ENCODE measurements at regions of chr22 and their contacts with region 1.

Region 1: DNA sequence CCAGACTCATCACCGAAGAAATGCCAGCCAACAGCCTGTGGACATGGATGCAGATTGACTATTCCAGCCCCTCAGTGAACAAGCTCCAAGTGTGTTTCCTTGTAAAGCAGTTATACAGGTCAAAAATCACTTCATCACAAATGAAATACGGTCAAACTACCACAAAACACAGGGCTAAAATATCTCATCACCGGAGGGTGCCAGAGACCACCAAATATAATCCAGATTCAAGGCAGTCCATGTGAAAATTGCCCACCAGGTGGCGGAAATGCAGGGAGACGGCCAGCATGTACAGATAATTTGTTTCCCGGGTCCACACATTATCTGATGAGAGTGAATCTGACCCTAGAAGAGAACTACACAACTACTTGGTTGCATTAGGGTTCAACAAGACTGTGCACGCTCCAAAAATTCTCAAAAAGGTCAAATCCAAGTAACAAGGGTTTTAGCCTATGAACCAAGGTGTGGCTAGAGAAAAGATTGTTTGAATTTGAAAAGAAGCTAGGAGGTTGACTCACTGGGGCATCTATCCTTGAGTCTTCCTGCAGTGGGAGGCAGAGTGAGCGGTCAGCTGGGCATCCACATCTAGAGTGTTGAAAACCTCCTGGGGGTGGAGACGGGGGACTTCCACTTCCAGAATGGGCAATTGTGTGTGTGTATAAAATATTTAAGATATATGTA is 71.7 kb downstream of the IGLL5 start:
- DNase-seq: peak; percentile 61 to 72
- H3K4me3 ChIP-seq: no peak overlapping the region
- H3K27ac ChIP-seq: no peak overlapping the region
- H3K4me1 ChIP-seq: no peaks in the 10 kb centered on the region
- H3K27me3 ChIP-seq: no peaks in the 10 kb centered on the region
- CTCF ChIP-seq: peak; percentile 79 to 94 (median 86)
- POLR2A ChIP-seq: no peak

Region 2: GRCh38 chr22:23035557-23036277 is 76.4 kb after region 1 on chr22:
- intact Hi-C with region 1: no loop called
- DNase-seq: no peak
- H3K4me3 ChIP-seq: no peak overlapping the region
- H3K27ac ChIP-seq: no peak overlapping the region
- H3K4me1 ChIP-seq: no peaks in the 10 kb centered on the region
- H3K27me3 ChIP-seq: no peaks in the 10 kb centered on the region
- CTCF ChIP-seq: no peak
- POLR2A ChIP-seq: no peak

Region 3: GRCh38 chr22:23110190-23110913 is 151.1 kb after region 1 on chr22:
- intact Hi-C with region 1: no loop called
- DNase-seq: no peak
- H3K4me3 ChIP-seq: no peak overlapping the region
- H3K27ac ChIP-seq: no peak overlapping the region
- H3K4me1 ChIP-seq: no peaks in the 10 kb centered on the region
- H3K27me3 ChIP-seq: no peaks in the 10 kb centered on the region
- CTCF ChIP-seq: no peak
- POLR2A ChIP-seq: no peak

Region 4: DNA sequence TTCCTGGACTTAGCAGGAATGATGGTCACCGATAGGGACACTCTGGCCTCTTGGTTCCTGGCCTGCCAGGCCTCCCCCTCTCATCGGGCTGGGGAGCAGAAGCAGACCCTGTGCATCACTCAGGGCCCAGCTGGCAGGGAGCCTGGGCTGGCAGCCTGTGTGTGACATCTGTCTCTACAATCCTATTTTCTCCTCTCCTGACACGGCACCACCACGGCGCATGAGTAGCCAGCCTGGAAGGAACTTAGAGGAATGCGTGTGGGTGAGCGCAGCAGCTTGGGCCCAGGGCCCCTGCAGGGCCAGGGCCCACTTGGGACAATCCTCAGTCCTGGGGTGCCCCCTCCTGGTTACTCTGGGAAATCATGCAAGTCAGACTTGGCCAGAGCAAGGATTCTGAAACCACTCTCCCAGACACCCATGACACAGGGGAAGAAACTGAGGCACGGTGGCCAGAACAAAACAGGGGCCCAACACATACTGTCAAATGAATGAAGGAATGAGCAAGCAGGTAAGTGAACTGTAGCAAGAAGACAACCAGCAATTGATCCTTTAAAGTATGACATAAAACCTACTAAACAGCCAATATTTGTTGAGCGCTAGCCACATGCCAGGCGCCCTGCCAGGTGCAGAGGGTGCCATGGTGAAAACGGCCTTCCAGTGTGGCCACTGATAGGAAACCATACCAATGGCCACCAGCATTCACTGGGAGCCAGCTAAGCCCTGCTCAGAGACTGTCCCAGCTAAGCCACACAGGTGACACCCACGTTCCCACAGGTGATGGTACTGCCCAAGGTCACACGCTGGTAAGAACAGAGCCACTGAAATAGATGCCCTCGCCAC is 169.2 kb after region 1 on chr22:
- intact Hi-C with region 1: loop called (anchors 10 kb)
- DNase-seq: peak; percentile 64 to 66
- H3K4me3 ChIP-seq: no peak overlapping the region
- H3K27ac ChIP-seq: no peak overlapping the region
- H3K4me1 ChIP-seq: no peaks in the 10 kb centered on the region
- H3K27me3 ChIP-seq: no peaks in the 10 kb centered on the region
- CTCF ChIP-seq: peak; percentile 67 to 89 (median 73)
- POLR2A ChIP-seq: no peak